ENCODE measurements at regions of chr1 and their contacts with region 1.

Region 1: GRCh38 chr1:66331657-66332547 is 202.1 kb upstream of the SGIP1 start:
- DNase-seq: peak; percentile 86
- H3K4me3 Mint-ChIP-seq: peak overlapping the region; percentile 79
- H3K27ac Mint-ChIP-seq: peak overlapping the region; percentile 87
- H3K4me1 Mint-ChIP-seq: peaks cover 38% of the 10 kb centered on the region
- H3K27me3 Mint-ChIP-seq: no peaks in the 10 kb centered on the region
- CTCF ChIP-seq: peak; percentile 12

Region 2: GRCh38 chr1:66253330-66253921 is 78.5 kb before region 1 on chr1:
- CTCF ChIA-PET with region 1: interaction called, 19 read pairs
- POLR2A ChIA-PET with region 1: interaction called, 20 read pairs
- intact Hi-C with region 1: no loop called
- DNase-seq: peak; percentile 77
- H3K4me3 Mint-ChIP-seq: no peak overlapping the region
- H3K27ac Mint-ChIP-seq: no peak overlapping the region
- H3K4me1 Mint-ChIP-seq: peaks cover 32% of the 10 kb centered on the region
- H3K27me3 Mint-ChIP-seq: no peaks in the 10 kb centered on the region
- CTCF ChIP-seq: peak; percentile 77

Region 3: DNA sequence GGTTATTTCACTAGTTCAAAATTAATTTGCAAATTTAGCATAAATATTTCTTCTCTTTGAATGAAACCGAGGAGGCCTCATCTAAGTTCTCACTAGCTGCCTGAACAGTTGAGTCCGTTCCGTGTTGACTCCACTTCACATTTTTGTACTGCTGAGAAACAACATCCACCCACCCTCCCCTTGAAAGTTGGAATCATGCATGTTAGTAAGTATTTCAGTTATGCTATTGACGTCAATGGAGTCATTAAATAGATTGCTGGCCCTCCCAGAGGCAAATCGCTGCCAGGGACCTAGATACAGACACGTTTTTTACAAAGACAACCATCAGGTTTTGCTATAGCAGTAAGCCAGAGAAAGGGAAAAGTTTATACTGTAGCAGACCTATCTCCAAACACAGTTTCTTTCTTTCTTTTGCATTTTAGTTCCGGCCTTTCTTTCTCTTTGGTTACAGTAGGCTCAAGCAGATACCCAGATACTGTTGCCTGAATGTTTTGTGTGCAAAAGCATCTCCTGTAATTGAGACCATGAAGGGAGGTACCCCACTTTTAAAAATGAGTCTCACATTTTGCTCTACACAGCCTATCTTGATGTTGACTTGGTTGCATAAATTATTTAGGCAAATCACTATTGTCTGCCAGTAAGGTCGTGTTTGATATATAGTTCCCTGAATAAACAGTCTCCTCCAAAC is 60.5 kb before region 1 on chr1:
- CTCF ChIA-PET with region 1: interaction called, 19 read pairs
- POLR2A ChIA-PET with region 1: interaction called, 177 read pairs
- intact Hi-C with region 1: loop called (anchors 1 kb)
- DNase-seq: peak; percentile 97
- H3K4me3 Mint-ChIP-seq: peak overlapping the region; percentile 49
- H3K27ac Mint-ChIP-seq: peak overlapping the region; percentile 92
- H3K4me1 Mint-ChIP-seq: peaks cover 43% of the 10 kb centered on the region
- H3K27me3 Mint-ChIP-seq: no peaks in the 10 kb centered on the region
- CTCF ChIP-seq: no peak

Region 4: DNA sequence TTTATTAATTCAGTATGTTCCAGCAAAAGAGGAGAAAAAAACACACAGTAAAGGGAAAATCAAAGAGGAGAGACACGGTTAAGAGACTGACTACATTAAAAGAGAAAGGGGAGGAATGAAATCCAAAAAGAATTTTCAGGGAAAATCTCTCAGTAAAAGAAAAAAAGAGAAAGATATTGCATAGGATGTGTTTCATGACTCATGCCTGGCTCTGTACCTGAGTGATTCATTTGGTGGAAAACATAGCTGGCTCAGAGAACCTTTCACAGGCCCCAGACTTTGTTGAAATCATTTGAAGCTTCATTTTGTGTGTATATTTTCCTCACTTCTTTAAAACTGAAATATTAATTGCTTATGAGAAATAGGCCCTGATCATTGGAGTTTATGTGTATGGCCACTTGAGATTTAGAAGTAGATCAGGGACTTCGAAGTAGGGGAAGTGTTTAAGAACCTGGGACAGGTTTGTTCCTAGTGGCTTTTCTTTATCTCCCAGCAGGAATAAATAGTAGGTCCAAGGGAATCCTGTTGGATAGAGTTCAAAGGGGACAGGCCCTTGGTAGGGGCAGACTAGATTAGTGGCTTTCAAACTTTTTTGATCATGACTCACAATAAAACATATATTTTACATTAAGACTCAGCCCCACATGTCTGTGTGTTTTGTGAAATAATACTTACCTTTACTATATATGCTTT is 37.1 kb before region 1 on chr1:
- CTCF ChIA-PET with region 1: interaction called, 7 read pairs
- POLR2A ChIA-PET with region 1: interaction called, 92 read pairs
- intact Hi-C with region 1: no loop called
- DNase-seq: peak; percentile 85
- H3K4me3 Mint-ChIP-seq: peak overlapping the region; percentile 41
- H3K27ac Mint-ChIP-seq: peak overlapping the region; percentile 99
- H3K4me1 Mint-ChIP-seq: peaks cover 42% of the 10 kb centered on the region
- H3K27me3 Mint-ChIP-seq: no peaks in the 10 kb centered on the region
- CTCF ChIP-seq: no peak

Region 5: GRCh38 chr1:66316464-66317247 is 15.2 kb before region 1 on chr1:
- CTCF ChIA-PET with region 1: interaction called, 6 read pairs
- POLR2A ChIA-PET with region 1: interaction called, 10 read pairs
- intact Hi-C with region 1: no loop called
- DNase-seq: no peak
- H3K4me3 Mint-ChIP-seq: no peak overlapping the region
- H3K27ac Mint-ChIP-seq: no peak overlapping the region
- H3K4me1 Mint-ChIP-seq: peaks cover 12% of the 10 kb centered on the region
- H3K27me3 Mint-ChIP-seq: no peaks in the 10 kb centered on the region
- CTCF ChIP-seq: no peak

Region 6: GRCh38 chr1:66350001-66350547 is 18.2 kb after region 1 on chr1:
- CTCF ChIA-PET with region 1: interaction called, 11 read pairs
- POLR2A ChIA-PET with region 1: interaction called, 36 read pairs
- intact Hi-C with region 1: no loop called
- DNase-seq: no peak
- H3K4me3 Mint-ChIP-seq: no peak overlapping the region
- H3K27ac Mint-ChIP-seq: peak overlapping the region; percentile 36
- H3K4me1 Mint-ChIP-seq: peaks cover 56% of the 10 kb centered on the region
- H3K27me3 Mint-ChIP-seq: no peaks in the 10 kb centered on the region
- CTCF ChIP-seq: no peak

Region 7: DNA sequence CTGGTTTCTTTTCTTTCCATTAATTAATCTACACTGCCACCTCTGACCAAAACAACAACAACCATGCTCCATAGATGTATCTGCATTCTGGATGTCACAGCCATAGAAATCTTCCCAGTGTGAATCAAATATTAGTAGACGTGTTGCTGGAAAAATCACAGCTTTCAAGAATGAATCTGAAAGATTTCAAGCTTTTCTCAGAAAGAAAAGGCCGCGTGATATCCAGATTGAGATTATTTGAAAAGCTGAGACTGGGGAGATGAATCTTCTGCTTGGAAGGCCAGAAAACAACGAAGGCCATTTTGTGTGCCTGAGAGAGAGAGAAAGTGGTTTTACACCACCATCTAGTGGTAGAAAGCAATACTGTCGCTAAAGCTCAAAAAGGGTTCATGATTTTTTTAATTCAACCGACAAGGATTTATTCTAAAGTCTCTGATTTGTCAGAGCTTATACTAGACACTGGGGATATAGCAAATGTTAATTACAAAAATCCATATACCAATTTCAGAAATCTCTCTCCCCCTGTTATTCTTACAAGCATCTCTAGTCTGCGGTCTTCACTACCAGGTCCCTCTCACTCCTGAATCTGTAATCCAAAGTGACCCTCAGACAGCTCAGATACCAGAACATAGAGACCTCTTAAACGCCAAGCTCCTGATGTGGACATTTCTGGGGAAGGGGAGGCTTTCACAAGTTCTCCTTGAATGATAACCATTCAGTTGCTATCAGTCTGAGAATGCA is 114.5 kb after region 1 on chr1:
- CTCF ChIA-PET with region 1: interaction called, 25 read pairs
- POLR2A ChIA-PET with region 1: interaction called, 10 read pairs
- intact Hi-C with region 1: no loop called
- DNase-seq: peak; percentile 68
- H3K4me3 Mint-ChIP-seq: no peak overlapping the region
- H3K27ac Mint-ChIP-seq: no peak overlapping the region
- H3K4me1 Mint-ChIP-seq: no peaks in the 10 kb centered on the region
- H3K27me3 Mint-ChIP-seq: no peaks in the 10 kb centered on the region
- CTCF ChIP-seq: peak; percentile 75

Region 8: DNA sequence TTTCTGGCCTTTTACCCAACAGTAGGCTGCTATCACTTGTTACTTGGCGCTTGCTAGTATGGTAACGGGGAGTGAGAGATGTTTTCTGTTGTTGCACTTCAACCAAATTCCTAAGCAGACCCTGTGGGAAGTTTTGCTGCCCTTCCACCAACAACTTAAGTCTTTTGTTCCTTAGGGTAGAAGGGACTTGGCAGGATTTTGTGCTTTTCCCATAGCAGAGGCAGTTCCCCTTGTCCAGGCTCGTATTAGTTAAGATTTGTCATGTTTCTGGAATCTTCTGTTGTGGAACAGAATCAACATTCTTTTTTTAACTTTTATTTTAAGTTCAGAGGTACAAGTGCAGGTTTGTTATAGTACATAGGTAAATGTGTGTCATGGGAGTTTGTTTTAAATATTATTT is 128.9 kb after region 1 on chr1:
- CTCF ChIA-PET with region 1: no interaction called
- POLR2A ChIA-PET with region 1: no interaction called
- intact Hi-C with region 1: no loop called
- DNase-seq: no peak
- H3K4me3 Mint-ChIP-seq: no peak overlapping the region
- H3K27ac Mint-ChIP-seq: no peak overlapping the region
- H3K4me1 Mint-ChIP-seq: peaks cover 6% of the 10 kb centered on the region
- H3K27me3 Mint-ChIP-seq: no peaks in the 10 kb centered on the region
- CTCF ChIP-seq: no peak

Measured in MCF 10A (cell line).